ENCODE measurements at regions of chr10 and their contacts with region 1.

Region 1: GRCh38 chr10:27446091-27446918 is 57.8 kb upstream of the RAB18 start:
- DNase-seq: peak in 1 of 2 experiments; percentile 34
- H3K4me3 ChIP-seq: no peak overlapping the region
- H3K4me3 Mint-ChIP-seq: peak overlapping the region; percentile 4
- H3K27ac Mint-ChIP-seq: no peak overlapping the region
- H3K4me1 ChIP-seq: no peaks in the 10 kb centered on the region
- H3K4me1 Mint-ChIP-seq: peaks cover 10% of the 10 kb centered on the region
- H3K27me3 ChIP-seq: no peaks in the 10 kb centered on the region
- H3K27me3 Mint-ChIP-seq: no peaks in the 10 kb centered on the region
- CTCF ChIP-seq: peak; percentile 36 to 51

Region 2: GRCh38 chr10:27383595-27384542 is 62.4 kb before region 1 on chr10:
- CTCF ChIA-PET with region 1: no interaction called
- POLR2A ChIA-PET with region 1: no interaction called
- intact Hi-C with region 1: no loop called
- DNase-seq: no peak
- H3K4me3 ChIP-seq: no peak overlapping the region
- H3K4me3 Mint-ChIP-seq: no peak overlapping the region
- H3K27ac Mint-ChIP-seq: no peak overlapping the region
- H3K4me1 ChIP-seq: peaks cover 8% of the 10 kb centered on the region
- H3K4me1 Mint-ChIP-seq: peaks cover 9% of the 10 kb centered on the region
- H3K27me3 ChIP-seq: no peaks in the 10 kb centered on the region
- H3K27me3 Mint-ChIP-seq: peaks cover 7% of the 10 kb centered on the region
- CTCF ChIP-seq: no peak

Region 3: GRCh38 chr10:27490807-27491206 is 44.5 kb after region 1 on chr10:
- CTCF ChIA-PET with region 1: no interaction called
- POLR2A ChIA-PET with region 1: no interaction called
- intact Hi-C with region 1: loop called (anchors 1 kb)
- DNase-seq: no peak
- H3K4me3 ChIP-seq: no peak overlapping the region
- H3K4me3 Mint-ChIP-seq: no peak overlapping the region
- H3K27ac Mint-ChIP-seq: no peak overlapping the region
- H3K4me1 ChIP-seq: no peaks in the 10 kb centered on the region
- H3K4me1 Mint-ChIP-seq: no peaks in the 10 kb centered on the region
- H3K27me3 ChIP-seq: no peaks in the 10 kb centered on the region
- H3K27me3 Mint-ChIP-seq: peaks cover 2% of the 10 kb centered on the region
- CTCF ChIP-seq: no peak

Region 4: GRCh38 chr10:27504007-27504807 is 57.9 kb after region 1 on chr10 and contains the start of gene RAB18:
- CTCF ChIA-PET with region 1: interaction called, 13 read pairs
- POLR2A ChIA-PET with region 1: no interaction called
- intact Hi-C with region 1: no loop called
- DNase-seq: peak; percentile 99 to 100
- H3K4me3 ChIP-seq: peak within 1 kb of the TSS; percentile 94
- H3K4me3 Mint-ChIP-seq: peak within 1 kb of the TSS; percentile 95
- H3K27ac Mint-ChIP-seq: peak within 1 kb of the TSS; percentile 95
- H3K4me1 ChIP-seq: peaks cover 13% of the 10 kb centered on the region; the same call in 1 of the 2 replicates
- H3K4me1 Mint-ChIP-seq: peaks cover 14% of the 10 kb centered on the region
- H3K27me3 ChIP-seq: no peaks in the 10 kb centered on the region
- H3K27me3 Mint-ChIP-seq: no peaks in the 10 kb centered on the region
- CTCF ChIP-seq: peak in 1 of 2 experiments; percentile 2
- total RNA-seq, gene RAB18: 154 and 164 TPM in 2 replicates

Region 5: DNA sequence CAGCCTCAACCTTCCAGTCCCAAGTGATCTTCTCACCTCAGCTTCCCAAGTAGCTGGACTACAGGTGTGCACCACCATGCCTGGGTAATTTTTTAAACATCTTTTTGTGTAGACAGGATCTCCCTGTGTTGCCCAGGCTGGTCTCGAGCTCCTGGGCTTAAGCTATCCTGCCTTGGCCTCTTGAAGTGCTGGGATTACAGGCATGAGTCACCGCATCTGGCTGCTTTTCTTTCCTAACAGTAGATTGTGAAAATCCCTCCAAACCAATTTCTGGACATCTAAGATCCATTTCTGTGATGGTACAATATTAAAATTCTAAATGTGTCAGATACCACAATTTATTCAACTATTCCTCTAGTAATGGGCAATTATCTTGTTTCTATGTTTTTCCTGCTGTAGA is 96.5 kb after region 1 on chr10:
- CTCF ChIA-PET with region 1: no interaction called
- POLR2A ChIA-PET with region 1: no interaction called
- intact Hi-C with region 1: loop called (anchors 5 kb)
- DNase-seq: no peak
- H3K4me3 ChIP-seq: no peak overlapping the region
- H3K4me3 Mint-ChIP-seq: no peak overlapping the region
- H3K27ac Mint-ChIP-seq: no peak overlapping the region
- H3K4me1 ChIP-seq: peaks cover 6% of the 10 kb centered on the region
- H3K4me1 Mint-ChIP-seq: peaks cover 21% of the 10 kb centered on the region
- H3K27me3 ChIP-seq: no peaks in the 10 kb centered on the region
- H3K27me3 Mint-ChIP-seq: no peaks in the 10 kb centered on the region
- CTCF ChIP-seq: no peak

Region 6: GRCh38 chr10:27568196-27569175 is 122.2 kb after region 1 on chr10:
- CTCF ChIA-PET with region 1: no interaction called
- POLR2A ChIA-PET with region 1: no interaction called
- intact Hi-C with region 1: no loop called
- DNase-seq: no peak
- H3K4me3 ChIP-seq: no peak overlapping the region
- H3K4me3 Mint-ChIP-seq: no peak overlapping the region
- H3K27ac Mint-ChIP-seq: no peak overlapping the region
- H3K4me1 ChIP-seq: no peaks in the 10 kb centered on the region
- H3K4me1 Mint-ChIP-seq: peaks cover 9% of the 10 kb centered on the region
- H3K27me3 ChIP-seq: no peaks in the 10 kb centered on the region; the same call in 1 of the 2 replicates
- H3K27me3 Mint-ChIP-seq: no peaks in the 10 kb centered on the region
- CTCF ChIP-seq: no peak

Region 7: GRCh38 chr10:27661514-27662286 is 215.4 kb after region 1 on chr10:
- CTCF ChIA-PET with region 1: no interaction called
- POLR2A ChIA-PET with region 1: no interaction called
- intact Hi-C with region 1: loop called (anchors 1 kb)
- DNase-seq: no peak
- H3K4me3 ChIP-seq: no peak overlapping the region
- H3K4me3 Mint-ChIP-seq: no peak overlapping the region
- H3K27ac Mint-ChIP-seq: no peak overlapping the region
- H3K4me1 ChIP-seq: no peaks in the 10 kb centered on the region
- H3K4me1 Mint-ChIP-seq: no peaks in the 10 kb centered on the region
- H3K27me3 ChIP-seq: no peaks in the 10 kb centered on the region; the same call in 1 of the 2 replicates
- H3K27me3 Mint-ChIP-seq: peaks cover 42% of the 10 kb centered on the region
- CTCF ChIP-seq: no peak

Measured in Caco-2 (cell line).